Activated T-helper 1 cell treated with anti-CD3 and anti-CD28 coated beads, Interleukin-12 subunit alpha, Interleukin-12 subunit beta, Interleukin-2, Interleukin-4 antibody, amounts not matched to agents 30 ng/mL and 10 ng/mL and 1 ng/mL, durations not matched to agents 14 hours and 24 hours and 36 hours (primary cell): ENCODE measurements at regions of chr4 and their contacts with region 1.

Region 1: GRCh38 chr4:185471235-185472102 is at the start of gene CCDC110:
- DNase-seq: peak; percentile 77
- H3K4me3 Mint-ChIP-seq: peak within 1 kb of the TSS; percentile 89
- H3K27ac Mint-ChIP-seq: peak within 1 kb of the TSS; percentile 47
- H3K4me1 Mint-ChIP-seq: peaks cover 4% of the 10 kb centered on the region
- H3K27me3 Mint-ChIP-seq: peaks cover 52% of the 10 kb centered on the region
- total RNA-seq, gene CCDC110: not detected in 2 replicates

Region 2: GRCh38 chr4:185142912-185143595 is 328.4 kb before region 1 on chr4 and contains the start of gene SLC25A4:
- intact Hi-C with region 1: loop called (anchors 2 kb)
- DNase-seq: peak; percentile 56
- H3K4me3 Mint-ChIP-seq: peak within 1 kb of the TSS; percentile 82
- H3K27ac Mint-ChIP-seq: no peak within 1 kb of the TSS
- H3K4me1 Mint-ChIP-seq: peaks cover 12% of the 10 kb centered on the region
- H3K27me3 Mint-ChIP-seq: peaks cover 71% of the 10 kb centered on the region
- total RNA-seq, gene SLC25A4: 2.3 and 2.7 TPM in 2 replicates

Region 3: DNA sequence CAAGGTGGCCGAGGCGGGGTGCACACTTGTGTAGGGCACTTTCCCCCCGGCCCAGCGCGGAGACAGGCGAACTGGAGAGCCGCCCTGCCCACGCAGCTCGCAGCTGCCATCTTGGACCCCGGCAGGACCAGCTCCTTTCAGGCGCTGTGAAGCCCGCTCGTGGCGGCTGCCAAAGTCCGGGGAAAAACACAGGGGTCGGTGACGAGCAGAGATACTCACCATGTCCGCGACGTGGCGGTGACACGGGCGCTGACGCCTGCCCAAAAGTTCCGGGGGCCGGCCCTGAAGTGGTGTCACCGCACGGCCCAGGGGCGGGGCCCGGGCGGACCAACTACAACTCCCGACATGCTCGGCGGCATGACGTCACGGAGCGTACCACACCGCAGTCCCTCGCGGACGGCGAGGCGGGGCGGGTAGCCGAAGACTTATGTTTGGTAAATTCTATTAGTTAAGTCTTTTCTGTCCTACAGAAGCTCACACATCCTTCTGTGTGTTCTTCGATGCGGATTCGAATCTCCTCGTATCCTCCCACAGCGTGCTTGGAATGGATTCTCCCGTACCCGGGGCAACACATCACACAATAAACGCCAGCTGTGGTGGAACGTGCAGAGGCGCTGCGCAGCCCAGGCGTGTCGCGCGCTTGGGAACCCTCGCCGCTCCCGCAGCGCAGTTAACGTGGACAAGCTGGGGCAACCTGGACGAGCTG is 45.7 kb before region 1 on chr4 and contains the start of gene UFSP2:
- intact Hi-C with region 1: loop called (anchors 1 kb)
- DNase-seq: peak; percentile 86
- H3K4me3 Mint-ChIP-seq: peak within 1 kb of the TSS; percentile 88
- H3K27ac Mint-ChIP-seq: peak within 1 kb of the TSS; percentile 92
- H3K4me1 Mint-ChIP-seq: peaks cover 35% of the 10 kb centered on the region
- H3K27me3 Mint-ChIP-seq: peaks cover 7% of the 10 kb centered on the region
- total RNA-seq, gene UFSP2: 19.8 and 19.9 TPM in 2 replicates

Region 4: GRCh38 chr4:185488650-185489049 is 17.2 kb after region 1 on chr4:
- intact Hi-C with region 1: no loop called
- DNase-seq: no peak
- H3K4me3 Mint-ChIP-seq: no peak overlapping the region
- H3K27ac Mint-ChIP-seq: no peak overlapping the region
- H3K4me1 Mint-ChIP-seq: no peaks in the 10 kb centered on the region
- H3K27me3 Mint-ChIP-seq: peaks cover 10% of the 10 kb centered on the region

Region 5: GRCh38 chr4:185597532-185598188 is 126.2 kb after region 1 on chr4:
- intact Hi-C with region 1: loop called (anchors 1 kb)
- DNase-seq: peak; percentile 32
- H3K4me3 Mint-ChIP-seq: no peak overlapping the region
- H3K27ac Mint-ChIP-seq: no peak overlapping the region
- H3K4me1 Mint-ChIP-seq: no peaks in the 10 kb centered on the region
- H3K27me3 Mint-ChIP-seq: peaks cover 13% of the 10 kb centered on the region

Region 6: GRCh38 chr4:186037692-186038658 is 566.5 kb after region 1 on chr4:
- intact Hi-C with region 1: loop called (anchors 10 kb)
- DNase-seq: peak; percentile 5
- H3K4me3 Mint-ChIP-seq: no peak overlapping the region
- H3K27ac Mint-ChIP-seq: no peak overlapping the region
- H3K4me1 Mint-ChIP-seq: no peaks in the 10 kb centered on the region
- H3K27me3 Mint-ChIP-seq: peaks cover 11% of the 10 kb centered on the region